ENCODE measurements at regions of chr6 and their contacts with region 1.

Region 1: DNA sequence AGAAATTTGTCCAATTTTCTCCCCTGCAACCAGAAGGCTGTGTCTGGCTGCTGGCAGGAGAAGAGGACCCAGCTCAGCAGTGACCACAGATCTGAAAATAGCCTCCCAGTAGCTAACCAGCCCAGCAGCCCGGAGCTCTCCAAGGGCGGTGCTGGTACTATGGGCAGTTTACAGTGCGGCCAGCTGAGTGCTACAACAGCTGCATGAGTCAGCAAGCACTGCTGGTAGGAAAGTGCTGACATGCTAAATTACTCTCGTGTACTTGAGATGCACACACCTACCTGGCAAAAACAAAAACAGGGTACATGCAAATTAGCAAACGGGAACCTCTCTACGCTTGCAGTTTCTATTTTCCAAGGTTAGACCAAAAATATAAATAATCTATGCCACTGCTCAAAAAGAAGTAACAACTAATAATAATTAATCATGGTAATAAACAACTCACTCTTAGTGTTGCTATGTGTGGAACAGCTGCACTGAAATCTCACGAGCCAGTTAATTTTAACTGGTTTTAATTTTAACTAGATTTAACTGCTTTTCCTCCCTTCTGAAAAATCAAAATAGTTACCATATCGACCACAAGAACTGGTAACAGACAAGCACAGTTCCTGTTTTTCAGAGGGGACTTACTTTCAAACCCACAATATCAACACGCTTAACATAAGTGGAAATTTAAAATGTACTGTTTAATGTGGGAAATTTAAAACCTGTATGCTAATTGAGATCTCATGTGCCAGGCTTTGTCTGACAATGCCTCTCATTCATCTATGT is 10.8 kb downstream of the BACH2 start:
- DNase-seq: peak; percentile 92
- H3K4me3 ChIP-seq: no peak overlapping the region
- H3K27ac ChIP-seq: peak overlapping the region; percentile 90
- H3K4me1 ChIP-seq: peaks cover 24% of the 10 kb centered on the region
- H3K27me3 ChIP-seq: no peaks in the 10 kb centered on the region
- CTCF ChIP-seq: no peak

Region 2: DNA sequence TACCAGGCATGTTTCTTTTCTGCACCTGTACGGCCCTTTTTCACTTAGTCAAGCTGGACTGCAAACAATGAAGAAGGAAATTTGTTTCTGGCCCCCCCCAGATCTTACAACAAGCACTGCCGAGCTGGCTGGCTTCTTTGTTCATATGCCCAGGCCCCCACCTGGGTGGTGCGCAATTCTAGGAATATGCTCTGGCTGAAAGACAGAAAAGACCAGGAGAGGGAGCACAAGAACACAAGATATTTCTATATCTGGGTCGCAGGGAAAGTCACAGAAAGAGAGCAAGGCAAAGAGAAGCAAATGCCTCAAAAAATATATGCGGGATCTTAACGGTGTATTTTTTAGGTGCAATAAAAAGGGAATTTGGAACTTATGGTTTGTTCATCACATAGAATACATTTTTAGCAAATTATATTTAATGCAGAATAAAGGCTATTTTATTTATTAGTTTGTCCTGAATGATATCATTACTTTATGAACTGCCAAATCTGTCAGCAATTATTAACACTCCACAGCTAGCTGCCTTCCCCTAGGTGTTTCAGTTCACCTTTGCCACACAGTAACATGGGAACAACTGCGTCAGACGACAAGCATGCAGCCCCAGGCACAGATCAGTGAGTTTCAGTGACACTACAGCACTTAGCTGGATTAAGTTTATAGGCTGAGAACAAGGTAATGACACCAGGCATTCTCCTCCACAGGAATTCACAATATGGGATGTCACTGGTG is 315.0 kb before region 1 on chr6:
- CTCF ChIA-PET with region 1: interaction called, 5 read pairs
- dilution Hi-C with region 1: loop called (anchors 25 kb)
- in situ Hi-C with region 1: loop called in 1 of 2 experiments (anchors 25 kb)
- intact Hi-C with region 1: loop called (anchors 2 kb)
- DNase-seq: peak; percentile 45
- H3K4me3 ChIP-seq: no peak overlapping the region
- H3K27ac ChIP-seq: no peak overlapping the region
- H3K4me1 ChIP-seq: peaks cover 6% of the 10 kb centered on the region
- H3K27me3 ChIP-seq: no peaks in the 10 kb centered on the region
- CTCF ChIP-seq: peak; percentile 54 to 64

Region 3: GRCh38 chr6:90216072-90216977 is 69.5 kb before region 1 on chr6:
- CTCF ChIA-PET with region 1: interaction called, 5 read pairs
- dilution Hi-C with region 1: no loop called
- in situ Hi-C with region 1: loop called in 1 of 2 experiments (anchors 10 kb)
- intact Hi-C with region 1: loop called (anchors 1 kb)
- DNase-seq: no peak
- H3K4me3 ChIP-seq: no peak overlapping the region
- H3K27ac ChIP-seq: no peak overlapping the region
- H3K4me1 ChIP-seq: peaks cover 23% of the 10 kb centered on the region
- H3K27me3 ChIP-seq: no peaks in the 10 kb centered on the region
- CTCF ChIP-seq: no peak

Region 4: DNA sequence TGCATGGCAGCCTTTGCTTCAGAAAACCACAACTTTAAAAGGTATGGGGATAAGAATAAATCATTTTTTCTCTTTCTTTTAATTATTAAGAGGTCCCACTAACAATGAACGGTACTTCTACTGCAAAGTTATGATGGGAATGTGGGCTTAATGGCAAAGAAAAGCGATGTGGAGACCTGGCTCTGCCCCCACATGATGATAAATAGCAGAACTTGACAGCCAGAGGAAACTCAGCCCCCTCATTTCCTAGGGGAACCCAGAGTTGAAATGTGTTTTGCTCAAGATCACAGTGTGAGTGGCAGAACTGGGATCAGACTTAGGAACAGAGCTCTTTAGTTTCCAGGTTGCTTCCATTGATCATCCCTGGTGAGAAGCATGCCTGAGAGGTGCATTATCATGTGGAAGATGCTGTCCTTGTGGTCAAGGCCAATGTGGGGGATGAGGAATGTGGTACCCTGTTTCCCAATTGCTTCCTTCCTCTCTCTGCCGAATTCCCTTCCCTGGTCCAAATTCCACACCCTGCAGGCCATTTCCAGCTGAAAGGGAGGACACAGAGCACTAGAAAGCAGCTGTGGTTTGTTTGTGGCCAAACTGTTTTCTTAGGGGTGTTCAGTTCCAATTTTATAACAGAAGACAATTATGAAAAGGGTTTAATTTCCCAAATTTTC is 55.1 kb before region 1 on chr6:
- CTCF ChIA-PET with region 1: no interaction called
- dilution Hi-C with region 1: no loop called
- in situ Hi-C with region 1: no loop called
- intact Hi-C with region 1: no loop called
- DNase-seq: no peak
- H3K4me3 ChIP-seq: no peak overlapping the region
- H3K27ac ChIP-seq: no peak overlapping the region
- H3K4me1 ChIP-seq: peaks cover 2% of the 10 kb centered on the region
- H3K27me3 ChIP-seq: no peaks in the 10 kb centered on the region
- CTCF ChIP-seq: no peak

Region 5: DNA sequence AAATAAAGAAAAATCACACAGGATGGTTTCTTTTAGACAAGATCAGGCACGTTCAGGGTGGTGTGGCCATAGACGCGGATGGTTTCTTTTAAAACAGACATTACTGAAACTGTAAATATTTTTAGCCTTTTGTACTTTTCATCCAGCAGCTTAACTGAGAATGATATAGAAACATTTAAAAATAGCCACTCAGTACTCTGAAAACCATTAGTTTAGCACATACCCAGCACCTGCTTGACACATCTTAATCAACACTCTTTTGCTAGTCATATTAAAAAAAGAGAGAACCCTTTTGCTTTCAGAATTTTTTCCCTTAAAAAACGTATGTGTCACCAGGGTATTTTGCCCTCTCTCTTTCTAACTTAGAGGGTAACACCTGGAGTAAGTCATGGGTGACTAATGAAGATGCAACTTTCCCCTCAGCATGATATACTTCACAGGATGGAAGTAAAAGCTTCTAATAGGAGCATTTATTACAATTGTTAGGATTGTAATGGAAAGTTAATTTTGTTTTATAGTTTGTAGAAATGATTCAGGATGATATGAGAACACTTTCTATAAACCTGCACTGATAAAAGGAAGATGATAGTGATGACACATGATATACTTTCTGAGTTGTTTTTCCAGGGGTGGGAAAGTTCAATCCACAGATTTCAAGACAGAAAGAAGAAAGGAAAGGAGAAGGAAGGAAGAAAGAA is 34.4 kb before region 1 on chr6:
- CTCF ChIA-PET with region 1: no interaction called
- dilution Hi-C with region 1: no loop called
- in situ Hi-C with region 1: no loop called
- intact Hi-C with region 1: loop called (anchors 2 kb)
- DNase-seq: peak; percentile 78
- H3K4me3 ChIP-seq: peak overlapping the region in 1 of 3 experiments; percentile 15
- H3K27ac ChIP-seq: peak overlapping the region; percentile 60
- H3K4me1 ChIP-seq: peaks cover 23% of the 10 kb centered on the region
- H3K27me3 ChIP-seq: no peaks in the 10 kb centered on the region
- CTCF ChIP-seq: no peak

Region 6: GRCh38 chr6:90393232-90393884 is 107.6 kb after region 1 on chr6:
- CTCF ChIA-PET with region 1: no interaction called
- dilution Hi-C with region 1: no loop called
- in situ Hi-C with region 1: no loop called
- intact Hi-C with region 1: loop called (anchors 1 kb)
- DNase-seq: peak; percentile 57
- H3K4me3 ChIP-seq: no peak overlapping the region
- H3K27ac ChIP-seq: no peak overlapping the region
- H3K4me1 ChIP-seq: no peaks in the 10 kb centered on the region
- H3K27me3 ChIP-seq: no peaks in the 10 kb centered on the region
- CTCF ChIP-seq: peak; percentile 75 to 80

Region 7: GRCh38 chr6:90434094-90434493 is 148.3 kb after region 1 on chr6:
- CTCF ChIA-PET with region 1: no interaction called
- dilution Hi-C with region 1: no loop called
- in situ Hi-C with region 1: no loop called
- intact Hi-C with region 1: loop called (anchors 1 kb)
- DNase-seq: no peak
- H3K4me3 ChIP-seq: no peak overlapping the region
- H3K27ac ChIP-seq: no peak overlapping the region
- H3K4me1 ChIP-seq: peaks cover 5% of the 10 kb centered on the region
- H3K27me3 ChIP-seq: no peaks in the 10 kb centered on the region
- CTCF ChIP-seq: peak; percentile 19 to 23

Region 8: GRCh38 chr6:90478789-90479602 is 193.2 kb after region 1 on chr6:
- CTCF ChIA-PET with region 1: no interaction called
- dilution Hi-C with region 1: no loop called
- in situ Hi-C with region 1: loop called (anchors 5 to 10 kb)
- intact Hi-C with region 1: loop called (anchors 1 kb)
- DNase-seq: peak; percentile 93
- H3K4me3 ChIP-seq: no peak overlapping the region
- H3K27ac ChIP-seq: no peak overlapping the region
- H3K4me1 ChIP-seq: peaks cover 16% of the 10 kb centered on the region
- H3K27me3 ChIP-seq: no peaks in the 10 kb centered on the region
- CTCF ChIP-seq: peak; percentile 80 to 88